OCI-LY7 (cell line): ENCODE measurements at regions of chr21 and their contacts with region 1.

Region 1: DNA sequence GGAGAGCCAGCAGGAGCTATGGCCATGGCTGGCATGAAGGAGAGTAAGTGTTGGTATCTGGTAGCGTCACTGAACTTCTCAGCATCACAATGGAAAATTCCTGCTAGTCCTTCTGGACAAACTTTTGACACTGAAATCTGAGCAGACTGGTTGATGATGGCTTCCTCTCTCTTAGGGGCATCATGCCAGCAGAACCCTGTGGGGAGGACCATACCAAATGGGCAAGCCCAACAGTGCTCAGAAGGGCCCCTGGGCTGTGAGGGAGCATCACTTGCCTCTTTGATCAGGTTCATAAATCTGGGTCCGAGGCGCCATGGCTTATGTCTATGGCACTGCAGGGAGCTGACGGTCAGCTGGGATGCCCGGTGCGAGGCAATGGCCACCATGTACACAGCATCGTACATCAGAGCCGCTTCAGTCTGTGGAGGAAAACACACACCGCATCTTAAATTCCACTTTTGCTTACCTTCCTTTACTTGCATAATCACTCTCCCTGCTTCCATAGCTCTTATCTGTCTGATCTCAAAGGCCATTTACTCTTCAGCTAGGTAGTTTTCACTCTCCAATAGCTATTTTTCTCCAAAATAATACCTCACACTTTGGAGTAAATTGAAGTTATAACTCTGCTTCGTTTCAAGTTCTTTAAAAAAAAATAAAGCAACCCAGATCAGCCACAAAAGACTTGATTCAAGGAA is 297.1 kb downstream of the GRIK1 start:
- DNase-seq: no peak
- H3K4me3 ChIP-seq: no peak overlapping the region
- H3K27ac ChIP-seq: no peak overlapping the region
- H3K4me1 ChIP-seq: peaks cover 33% of the 10 kb centered on the region
- CTCF ChIP-seq: no peak

Region 2: DNA sequence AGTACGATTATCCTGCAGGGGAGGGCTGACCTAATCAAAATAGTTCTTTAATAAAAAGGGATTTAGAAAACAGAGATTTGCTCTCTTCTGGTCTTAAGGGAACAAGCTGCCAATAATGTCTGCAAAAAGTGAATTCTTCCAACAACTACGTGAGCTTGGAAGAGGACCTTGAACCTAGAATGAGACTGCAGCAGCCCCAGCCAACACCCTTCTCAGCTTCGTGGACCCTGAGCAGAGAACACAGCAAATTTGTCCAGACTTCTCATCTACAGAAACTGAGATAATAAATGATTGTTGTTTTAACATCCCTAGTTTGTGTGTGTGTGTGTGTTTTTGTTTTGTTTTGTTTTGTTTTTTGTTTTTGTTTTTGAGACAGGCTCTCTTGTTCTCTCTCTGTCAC is 12.3 kb before region 1 on chr21:
- CTCF ChIA-PET with region 1: no interaction called
- POLR2A ChIA-PET with region 1: interaction called, 11 read pairs
- intact Hi-C with region 1: no loop called
- DNase-seq: no peak
- H3K4me3 ChIP-seq: no peak overlapping the region
- H3K27ac ChIP-seq: no peak overlapping the region
- H3K4me1 ChIP-seq: no peaks in the 10 kb centered on the region
- CTCF ChIP-seq: no peak

Region 3: GRCh38 chr21:29737186-29737585 is 94.5 kb after region 1 on chr21:
- CTCF ChIA-PET with region 1: no interaction called
- POLR2A ChIA-PET with region 1: no interaction called
- intact Hi-C with region 1: no loop called
- DNase-seq: no peak
- H3K4me3 ChIP-seq: no peak overlapping the region
- H3K27ac ChIP-seq: no peak overlapping the region
- H3K4me1 ChIP-seq: no peaks in the 10 kb centered on the region
- CTCF ChIP-seq: no peak